IMR-90 (cell line): ENCODE measurements at regions of chr12 and their contacts with region 1.

Region 1: DNA sequence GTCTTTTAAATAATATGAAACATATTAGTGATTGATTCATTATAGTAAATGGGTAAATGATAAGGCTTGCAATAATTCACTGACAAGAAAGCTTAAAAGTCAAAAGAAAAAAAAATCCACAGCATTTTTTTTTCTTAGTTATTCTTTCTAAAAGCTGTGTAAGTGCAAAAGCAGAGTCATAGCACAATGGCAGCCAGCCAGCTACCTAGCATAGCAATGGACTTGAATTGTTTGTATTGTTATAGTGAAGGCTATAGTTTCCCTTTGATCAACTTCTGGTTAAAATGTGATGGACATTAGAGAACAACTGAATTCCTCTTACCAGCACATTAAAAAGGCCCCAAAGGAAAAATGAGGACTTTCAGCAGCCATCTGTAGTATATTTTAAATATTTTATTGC is 232.1 kb downstream of the NAV3 start:
- DNase-seq: peak; percentile 83
- ATAC-seq: peak; percentile 37; the same call in 1 of the 2 replicates
- H3K4me3 ChIP-seq: no peak overlapping the region
- H3K27ac ChIP-seq: no peak overlapping the region
- H3K4me1 ChIP-seq: 0 out of 2 replicates have a peak, but pooled peaks cover 1% of the 10 kb centered on the region
- H3K27me3 ChIP-seq: no peaks in the 10 kb centered on the region
- CTCF ChIP-seq: no peak
- POLR2A ChIP-seq: no peak
- RAD21 ChIP-seq: no peak

Region 2: GRCh38 chr12:78081590-78082314 is 19.0 kb after region 1 on chr12:
- CTCF ChIA-PET with region 1: no interaction called
- POLR2A ChIA-PET with region 1: no interaction called
- dilution Hi-C with region 1: no loop called
- in situ Hi-C with region 1: no loop called
- intact Hi-C with region 1: loop called (anchors 2 kb)
- DNase-seq: no peak
- ATAC-seq: no peak
- H3K4me3 ChIP-seq: no peak overlapping the region
- H3K27ac ChIP-seq: no peak overlapping the region
- H3K4me1 ChIP-seq: no peaks in the 10 kb centered on the region; the same call in 1 of the 2 replicates
- H3K27me3 ChIP-seq: no peaks in the 10 kb centered on the region
- CTCF ChIP-seq: no peak
- POLR2A ChIP-seq: no peak
- RAD21 ChIP-seq: no peak

Region 3: GRCh38 chr12:78101946-78102635 is 39.3 kb after region 1 on chr12:
- CTCF ChIA-PET with region 1: no interaction called
- POLR2A ChIA-PET with region 1: no interaction called
- dilution Hi-C with region 1: no loop called
- in situ Hi-C with region 1: no loop called
- intact Hi-C with region 1: no loop called
- DNase-seq: no peak
- ATAC-seq: no peak
- H3K4me3 ChIP-seq: no peak overlapping the region
- H3K27ac ChIP-seq: no peak overlapping the region
- H3K4me1 ChIP-seq: no peaks in the 10 kb centered on the region
- H3K27me3 ChIP-seq: no peaks in the 10 kb centered on the region
- CTCF ChIP-seq: no peak
- POLR2A ChIP-seq: no peak
- RAD21 ChIP-seq: no peak